Activated naive CD8-positive, alpha-beta T cell treated with anti-CD3 and anti-CD28 coated beads, Interleukin-2, amount 10 ng/mL, durations not matched to agents 7 days and 5 days (primary cell): ENCODE measurements at regions of chr19 and their contacts with region 1.

Region 1: DNA sequence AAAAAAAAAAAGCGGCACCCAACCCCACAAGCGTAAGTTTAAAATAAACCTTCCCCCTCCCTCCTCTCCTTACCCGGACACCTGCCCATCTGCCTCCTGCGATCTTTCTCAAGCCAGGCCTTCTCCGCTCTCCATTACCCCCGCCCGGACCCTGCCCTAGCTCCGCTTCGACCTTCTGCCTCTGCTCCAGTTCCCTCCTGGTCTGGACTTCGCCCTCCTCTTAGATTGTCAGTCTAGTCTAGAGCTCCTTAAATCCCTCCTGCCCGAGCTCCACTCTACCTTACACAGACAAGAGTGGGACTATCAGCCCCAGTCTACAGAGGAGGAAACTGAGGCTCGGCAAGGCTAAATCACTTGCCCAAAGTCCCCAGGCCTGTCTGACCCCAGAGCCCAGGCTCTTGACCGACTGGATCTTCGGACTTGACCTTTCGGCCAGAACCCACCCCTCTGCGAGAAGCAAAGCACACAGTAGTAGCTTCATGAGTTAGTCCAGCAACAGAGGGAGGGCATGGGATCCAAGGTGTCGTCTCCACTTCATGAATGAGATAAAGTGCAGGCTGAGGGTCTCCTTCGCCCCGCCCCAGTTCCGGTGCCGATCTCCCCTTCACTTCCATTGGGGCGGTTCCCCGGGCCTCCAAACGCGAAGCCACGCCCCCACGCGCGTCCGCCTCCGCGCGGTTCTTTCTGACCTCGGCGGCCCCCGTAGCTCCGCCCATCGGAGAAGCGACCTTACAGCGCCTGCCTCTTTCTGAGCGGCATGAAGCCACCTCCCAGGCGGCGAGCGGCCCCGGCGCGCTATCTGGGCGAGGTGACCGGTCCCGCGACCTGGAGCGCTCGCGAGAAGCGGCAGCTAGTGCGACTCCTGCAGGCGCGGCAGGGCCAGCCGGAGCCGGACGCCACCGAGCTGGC is at the start of gene SNAPC2:
- DNase-seq: peak; percentile 99
- ATAC-seq: peak; percentile 77
- H3K4me3 Mint-ChIP-seq: peak within 1 kb of the TSS; percentile 100
- H3K27ac Mint-ChIP-seq: peak within 1 kb of the TSS; percentile 99
- H3K4me1 Mint-ChIP-seq: peaks cover 24% of the 10 kb centered on the region
- H3K27me3 Mint-ChIP-seq: peaks cover 40% of the 10 kb centered on the region
- total RNA-seq, gene SNAPC2: 18.3 to 20.7 TPM

Region 2: GRCh38 chr19:7861955-7862951 is 57.6 kb before region 1 on chr19:
- POLR2A ChIA-PET with region 1: interaction called, 13 read pairs
- DNase-seq: peak; percentile 80
- ATAC-seq: peak; percentile 59
- H3K4me3 Mint-ChIP-seq: peak overlapping the region; percentile 42
- H3K27ac Mint-ChIP-seq: no peak overlapping the region
- H3K4me1 Mint-ChIP-seq: peaks cover 8% of the 10 kb centered on the region
- H3K27me3 Mint-ChIP-seq: peaks cover 22% of the 10 kb centered on the region

Region 3: GRCh38 chr19:7868676-7869452 is 51.0 kb before region 1 on chr19:
- POLR2A ChIA-PET with region 1: interaction called, 14 read pairs
- DNase-seq: peak; percentile 93
- ATAC-seq: peak; percentile 83
- H3K4me3 Mint-ChIP-seq: peak overlapping the region; percentile 79
- H3K27ac Mint-ChIP-seq: peak overlapping the region; percentile 75
- H3K4me1 Mint-ChIP-seq: peaks cover 29% of the 10 kb centered on the region
- H3K27me3 Mint-ChIP-seq: peaks cover 49% of the 10 kb centered on the region

Region 4: DNA sequence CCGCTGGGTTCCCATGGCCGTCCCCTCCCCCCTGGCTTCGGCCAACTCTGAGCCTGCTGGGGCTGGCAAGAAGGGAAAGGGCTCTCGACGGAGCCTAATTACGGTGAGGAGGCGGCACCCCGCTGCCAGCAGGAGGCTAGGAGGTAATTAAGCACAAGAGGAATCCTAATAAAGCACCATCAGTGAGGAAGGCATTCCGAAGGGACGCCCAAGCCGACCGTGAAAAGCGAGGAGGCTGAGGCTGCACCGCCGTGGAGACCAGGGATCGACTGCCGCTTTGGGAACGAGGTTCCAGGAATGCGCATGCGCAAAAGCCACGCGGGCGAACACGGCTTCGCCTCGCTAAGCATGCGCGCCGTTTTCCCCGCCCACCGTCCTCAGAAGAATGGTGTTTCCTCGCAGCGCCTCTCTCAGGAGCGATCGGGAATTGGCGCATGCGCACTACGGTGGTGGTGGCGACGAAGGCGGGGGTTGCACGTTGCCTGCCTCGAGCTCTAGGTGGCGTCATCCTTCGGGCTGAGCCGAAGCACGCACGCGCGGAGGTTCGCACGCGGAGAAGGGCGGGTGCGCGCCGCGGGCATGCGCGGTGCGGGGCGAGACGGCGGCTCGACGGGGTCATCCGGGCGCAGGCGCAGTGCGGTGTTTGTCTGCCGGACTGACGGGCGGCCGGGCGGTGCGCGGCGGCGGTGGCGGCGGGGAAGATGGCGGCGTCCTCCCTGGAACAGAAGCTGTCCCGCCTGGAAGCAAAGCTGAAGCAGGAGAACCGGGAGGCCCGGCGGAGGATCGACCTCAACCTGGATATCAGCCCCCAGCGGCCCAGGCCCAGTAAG is 16.4 kb before region 1 on chr19 and contains the start of gene MAP2K7:
- POLR2A ChIA-PET with region 1: interaction called, 22 read pairs
- DNase-seq: peak; percentile 100
- ATAC-seq: peak; percentile 86
- H3K4me3 Mint-ChIP-seq: peak within 1 kb of the TSS; percentile 90
- H3K27ac Mint-ChIP-seq: peak within 1 kb of the TSS; percentile 92
- H3K4me1 Mint-ChIP-seq: peaks cover 15% of the 10 kb centered on the region
- H3K27me3 Mint-ChIP-seq: no peaks in the 10 kb centered on the region
- total RNA-seq, gene MAP2K7: 46.8 to 46.9 TPM

Region 5: DNA sequence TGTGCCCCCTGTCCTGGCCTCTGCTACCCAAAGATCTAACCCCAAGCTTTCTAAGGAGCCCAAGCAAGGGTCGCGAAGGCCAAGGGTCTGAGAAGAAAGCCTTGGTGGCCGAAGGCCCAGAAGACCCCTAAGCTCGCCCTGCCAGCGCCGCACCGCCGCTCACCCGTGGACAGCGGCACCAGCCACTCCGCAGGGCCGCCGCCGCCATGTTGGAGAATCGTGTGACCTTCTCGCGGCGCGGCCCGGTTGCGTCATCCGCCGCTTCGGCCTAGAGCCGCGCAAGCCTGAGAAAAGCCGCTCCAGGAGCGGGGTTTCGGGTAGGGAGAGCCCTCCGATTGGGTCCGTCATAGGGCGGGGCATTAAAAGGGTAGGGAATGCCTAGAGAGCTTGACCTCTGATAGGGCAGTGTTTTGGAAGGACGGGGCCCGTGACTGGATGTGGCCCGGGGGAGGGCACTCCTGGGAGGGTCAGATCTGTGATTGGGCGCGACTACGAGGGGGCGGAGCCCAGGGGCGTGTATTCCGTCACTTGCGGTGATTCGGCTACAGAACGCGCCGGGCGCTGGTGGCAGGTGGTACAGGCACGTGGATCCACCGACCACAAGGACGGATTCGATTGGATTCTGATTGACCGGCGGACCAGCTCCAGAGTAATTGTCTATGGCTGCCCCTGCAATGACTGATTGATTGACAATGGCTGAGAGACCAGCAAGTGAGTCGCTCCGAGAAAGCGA is 23.7 kb after region 1 on chr19 and contains the start of gene TIMM44:
- POLR2A ChIA-PET with region 1: interaction called, 19 read pairs
- DNase-seq: peak; percentile 97
- ATAC-seq: peak; percentile 99
- H3K4me3 Mint-ChIP-seq: peak within 1 kb of the TSS; percentile 87
- H3K27ac Mint-ChIP-seq: peak within 1 kb of the TSS; percentile 89
- H3K4me1 Mint-ChIP-seq: peaks cover 20% of the 10 kb centered on the region
- H3K27me3 Mint-ChIP-seq: no peaks in the 10 kb centered on the region
- total RNA-seq, gene TIMM44: 66.6 to 67.8 TPM